GM10248 (cell line): ENCODE measurements at regions of chr22 and their contacts with region 1.

Region 1: GRCh38 chr22:17258015-17258787 is 39.0 kb upstream of the ADA2 start:
- DNase-seq: peak; percentile 86
- CTCF ChIP-seq: no peak

Region 2: GRCh38 chr22:17191163-17191784 is 66.9 kb before region 1 on chr22:
- CTCF ChIA-PET with region 1: no interaction called
- POLR2A ChIA-PET with region 1: no interaction called
- DNase-seq: no peak
- CTCF ChIP-seq: no peak

Region 3: GRCh38 chr22:17247832-17248231 is 10.4 kb before region 1 on chr22:
- CTCF ChIA-PET with region 1: interaction called, 17 read pairs
- POLR2A ChIA-PET with region 1: interaction called, 4 read pairs
- DNase-seq: no peak
- CTCF ChIP-seq: no peak

Region 4: DNA sequence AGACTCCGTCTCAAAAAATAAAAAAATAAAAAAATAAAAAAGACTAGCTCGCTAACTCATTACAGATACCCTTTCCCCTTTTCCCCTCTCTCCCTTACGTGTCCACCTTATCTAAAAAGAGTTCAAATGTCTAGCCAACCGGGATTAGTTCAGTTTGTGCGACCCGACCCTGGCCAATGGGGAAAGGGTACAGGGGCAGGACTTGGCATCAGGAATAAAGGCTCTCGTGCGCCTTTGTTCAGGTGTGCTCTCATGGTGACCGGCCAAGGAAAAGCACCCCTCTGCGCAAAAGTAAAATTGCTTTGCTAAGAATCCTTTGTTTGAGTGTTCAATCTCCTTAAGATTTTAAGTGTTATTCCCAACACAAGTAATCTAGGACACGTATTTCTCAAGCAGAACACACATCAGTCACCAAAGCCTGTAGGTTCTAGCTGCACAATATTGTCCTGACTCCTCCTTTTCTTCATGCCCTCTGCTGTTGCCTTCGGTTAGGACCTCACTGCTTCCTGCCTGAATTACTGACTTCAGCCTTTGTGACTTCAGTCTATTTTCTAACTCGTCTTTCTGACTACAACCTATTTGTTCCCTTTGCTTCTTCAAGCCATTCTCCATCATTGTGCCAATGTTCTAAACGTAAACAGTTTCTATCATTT is 90.4 kb after region 1 on chr22:
- CTCF ChIA-PET with region 1: no interaction called
- POLR2A ChIA-PET with region 1: no interaction called
- DNase-seq: no peak
- CTCF ChIP-seq: no peak

Region 5: GRCh38 chr22:17483688-17484381 is 225.6 kb after region 1 on chr22:
- CTCF ChIA-PET with region 1: no interaction called
- POLR2A ChIA-PET with region 1: no interaction called
- DNase-seq: no peak
- CTCF ChIP-seq: no peak